ENCODE measurements at regions of chr13 and their contacts with region 1.

Region 1: GRCh38 chr13:97975848-97976609 is 22.6 kb downstream of the IPO5 start:
- DNase-seq: peak; percentile 89
- H3K4me3 Mint-ChIP-seq: peak overlapping the region; percentile 92
- H3K27ac Mint-ChIP-seq: peak overlapping the region; percentile 97
- H3K4me1 Mint-ChIP-seq: peaks cover 28% of the 10 kb centered on the region
- H3K27me3 Mint-ChIP-seq: no peaks in the 10 kb centered on the region

Region 2: GRCh38 chr13:98004111-98004510 is 28.1 kb after region 1 on chr13:
- CTCF ChIA-PET with region 1: no interaction called
- intact Hi-C with region 1: no loop called
- DNase-seq: no peak
- H3K4me3 Mint-ChIP-seq: no peak overlapping the region
- H3K27ac Mint-ChIP-seq: no peak overlapping the region
- H3K4me1 Mint-ChIP-seq: no peaks in the 10 kb centered on the region
- H3K27me3 Mint-ChIP-seq: no peaks in the 10 kb centered on the region

Region 3: GRCh38 chr13:98142380-98143156 is 166.5 kb after region 1 on chr13 and contains the start of gene FARP1:
- CTCF ChIA-PET with region 1: no interaction called
- intact Hi-C with region 1: loop called (anchors 1 kb)
- DNase-seq: peak; percentile 62
- H3K4me3 Mint-ChIP-seq: peak within 1 kb of the TSS; percentile 73
- H3K27ac Mint-ChIP-seq: no peak within 1 kb of the TSS
- H3K4me1 Mint-ChIP-seq: peaks cover 9% of the 10 kb centered on the region
- H3K27me3 Mint-ChIP-seq: peaks cover 52% of the 10 kb centered on the region
- total RNA-seq, gene FARP1: 0.27 to 0.38 TPM

Region 4: DNA sequence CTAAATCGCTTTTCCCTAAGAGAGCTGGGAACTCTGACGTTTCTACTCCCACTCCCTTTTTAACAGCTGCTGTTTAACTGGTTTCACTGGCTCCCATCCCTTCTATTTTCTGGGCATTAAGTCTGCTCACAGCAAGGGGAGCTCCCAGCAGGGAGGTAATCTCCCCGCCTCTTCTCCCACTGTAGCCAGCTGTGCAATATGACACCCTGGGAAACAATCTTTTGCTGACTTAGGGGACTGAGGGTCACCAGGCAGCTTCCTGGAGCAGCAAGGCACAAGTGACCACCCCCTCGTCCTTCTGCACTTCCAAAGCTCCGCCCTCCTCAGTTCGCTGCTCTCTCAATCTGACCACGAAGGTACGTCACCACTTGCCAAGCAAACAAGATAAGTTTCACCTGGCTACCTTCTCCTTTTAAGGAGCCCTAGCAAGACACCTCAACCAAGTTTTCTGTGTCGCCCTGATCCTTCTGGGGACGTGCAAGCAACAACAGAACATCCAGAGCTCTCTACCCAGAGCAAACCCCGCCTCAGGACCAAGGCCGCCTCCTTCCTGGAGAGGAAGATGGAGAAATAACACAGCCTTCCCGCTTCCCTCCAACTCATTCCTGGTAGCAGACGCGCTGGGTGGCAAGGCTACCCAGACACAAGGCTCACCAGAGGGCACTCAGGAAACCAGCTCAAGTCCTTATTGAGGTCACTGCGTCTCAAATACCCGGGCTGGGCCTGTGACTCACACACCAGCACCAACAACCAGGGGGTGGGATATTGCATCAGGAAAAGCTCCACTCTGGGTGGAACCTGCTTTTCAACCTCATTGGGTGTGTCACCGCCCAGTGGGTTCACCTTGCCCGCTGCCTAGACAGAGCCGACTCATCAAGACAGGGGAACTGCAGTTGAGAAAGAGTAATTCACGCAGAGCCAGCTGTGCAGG is 508.5 kb after region 1 on chr13:
- CTCF ChIA-PET with region 1: no interaction called
- intact Hi-C with region 1: loop called (anchors 10 kb)
- DNase-seq: peak; percentile 60
- H3K4me3 Mint-ChIP-seq: no peak overlapping the region
- H3K27ac Mint-ChIP-seq: peak overlapping the region; percentile 54
- H3K4me1 Mint-ChIP-seq: peaks cover 83% of the 10 kb centered on the region
- H3K27me3 Mint-ChIP-seq: no peaks in the 10 kb centered on the region

Region 5: DNA sequence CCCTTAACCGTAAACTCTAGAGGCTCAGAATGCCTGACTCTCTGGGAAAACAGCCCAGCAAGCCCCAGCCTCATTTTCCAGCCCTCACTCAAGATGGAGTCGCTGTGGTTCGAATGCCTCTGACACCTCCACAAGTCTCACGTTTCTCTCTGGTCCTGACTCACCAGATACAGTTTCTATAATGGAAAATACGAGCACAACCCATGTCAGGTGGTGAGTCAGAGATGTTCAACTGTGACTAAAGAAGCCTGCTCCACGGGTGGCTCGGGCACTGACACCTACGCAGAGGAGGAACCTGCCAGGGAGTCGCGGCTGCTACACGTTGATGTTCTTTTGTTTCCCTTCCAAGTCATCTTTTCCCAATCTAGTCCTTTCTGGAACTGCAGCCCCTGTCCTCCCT is 688.0 kb after region 1 on chr13:
- CTCF ChIA-PET with region 1: no interaction called
- intact Hi-C with region 1: loop called (anchors 2 kb)
- DNase-seq: peak; percentile 85
- H3K4me3 Mint-ChIP-seq: no peak overlapping the region
- H3K27ac Mint-ChIP-seq: peak overlapping the region; percentile 44
- H3K4me1 Mint-ChIP-seq: peaks cover 19% of the 10 kb centered on the region
- H3K27me3 Mint-ChIP-seq: no peaks in the 10 kb centered on the region

Measured in activated naive CD4-positive, alpha-beta T cell treated with anti-CD3 and anti-CD28 coated beads for 36 hours (primary cell).